Activated CD8-positive, alpha-beta memory T cell treated with anti-CD3 and anti-CD28 coated beads, Interleukin-2, amount 10 ng/mL, durations not matched to agents 7 days and 5 days (primary cell): ENCODE measurements at regions of chr1 and their contacts with region 1.

Region 1: GRCh38 chr1:110034451-110035235 is at the start of gene STRIP1:
- DNase-seq: peak; percentile 96
- ATAC-seq: peak; percentile 88
- H3K4me3 Mint-ChIP-seq: peak within 1 kb of the TSS; percentile 79
- H3K27ac Mint-ChIP-seq: peak within 1 kb of the TSS; percentile 95
- H3K4me1 Mint-ChIP-seq: peaks cover 54% of the 10 kb centered on the region
- H3K27me3 Mint-ChIP-seq: no peaks in the 10 kb centered on the region
- total RNA-seq, gene STRIP1: 40.4 to 40.8 TPM

Region 2: GRCh38 chr1:109838838-109839240 is 195.8 kb before region 1 on chr1:
- CTCF ChIA-PET with region 1: no interaction called
- DNase-seq: no peak
- ATAC-seq: no peak
- H3K4me3 Mint-ChIP-seq: no peak overlapping the region
- H3K27ac Mint-ChIP-seq: no peak overlapping the region
- H3K4me1 Mint-ChIP-seq: peaks cover 7% of the 10 kb centered on the region
- H3K27me3 Mint-ChIP-seq: peaks cover 2% of the 10 kb centered on the region

Region 3: GRCh38 chr1:110005971-110006370 is 28.7 kb before region 1 on chr1:
- CTCF ChIA-PET with region 1: interaction called, 17 read pairs
- DNase-seq: no peak
- ATAC-seq: no peak
- H3K4me3 Mint-ChIP-seq: no peak overlapping the region
- H3K27ac Mint-ChIP-seq: no peak overlapping the region
- H3K4me1 Mint-ChIP-seq: peaks cover 21% of the 10 kb centered on the region
- H3K27me3 Mint-ChIP-seq: no peaks in the 10 kb centered on the region

Region 4: DNA sequence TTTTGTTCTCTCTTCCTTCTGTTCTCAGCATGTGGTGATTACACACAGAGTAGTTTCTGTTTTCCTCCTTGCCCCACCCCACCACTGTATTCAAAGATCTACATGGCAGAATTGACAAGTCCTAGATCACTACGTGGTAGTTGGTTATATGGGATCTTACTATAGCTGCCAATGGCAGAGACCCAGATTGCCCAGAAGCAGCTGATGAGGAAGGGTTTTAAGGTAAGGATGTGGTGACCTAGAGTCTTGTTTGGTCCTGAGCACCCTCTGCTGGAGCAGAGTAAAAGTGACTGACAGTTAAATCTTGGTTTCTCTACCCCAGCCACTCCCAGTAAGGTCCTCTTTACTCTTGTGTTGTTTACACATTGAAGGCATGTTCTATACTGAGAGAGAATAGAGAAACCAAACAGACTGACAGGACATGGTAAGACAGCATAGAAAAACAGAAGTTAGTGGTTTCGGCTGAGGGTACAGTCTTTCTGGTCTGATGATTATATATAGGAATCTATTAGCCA is 23.1 kb before region 1 on chr1:
- CTCF ChIA-PET with region 1: interaction called, 30 read pairs
- DNase-seq: peak; percentile 62
- ATAC-seq: peak; percentile 97
- H3K4me3 Mint-ChIP-seq: no peak overlapping the region
- H3K27ac Mint-ChIP-seq: peak overlapping the region; percentile 65
- H3K4me1 Mint-ChIP-seq: peaks cover 4% of the 10 kb centered on the region
- H3K27me3 Mint-ChIP-seq: no peaks in the 10 kb centered on the region

Region 5: GRCh38 chr1:110019770-110020169 is 14.9 kb before region 1 on chr1:
- CTCF ChIA-PET with region 1: interaction called, 30 read pairs
- DNase-seq: no peak
- ATAC-seq: no peak
- H3K4me3 Mint-ChIP-seq: no peak overlapping the region
- H3K27ac Mint-ChIP-seq: no peak overlapping the region
- H3K4me1 Mint-ChIP-seq: no peaks in the 10 kb centered on the region
- H3K27me3 Mint-ChIP-seq: no peaks in the 10 kb centered on the region

Region 6: DNA sequence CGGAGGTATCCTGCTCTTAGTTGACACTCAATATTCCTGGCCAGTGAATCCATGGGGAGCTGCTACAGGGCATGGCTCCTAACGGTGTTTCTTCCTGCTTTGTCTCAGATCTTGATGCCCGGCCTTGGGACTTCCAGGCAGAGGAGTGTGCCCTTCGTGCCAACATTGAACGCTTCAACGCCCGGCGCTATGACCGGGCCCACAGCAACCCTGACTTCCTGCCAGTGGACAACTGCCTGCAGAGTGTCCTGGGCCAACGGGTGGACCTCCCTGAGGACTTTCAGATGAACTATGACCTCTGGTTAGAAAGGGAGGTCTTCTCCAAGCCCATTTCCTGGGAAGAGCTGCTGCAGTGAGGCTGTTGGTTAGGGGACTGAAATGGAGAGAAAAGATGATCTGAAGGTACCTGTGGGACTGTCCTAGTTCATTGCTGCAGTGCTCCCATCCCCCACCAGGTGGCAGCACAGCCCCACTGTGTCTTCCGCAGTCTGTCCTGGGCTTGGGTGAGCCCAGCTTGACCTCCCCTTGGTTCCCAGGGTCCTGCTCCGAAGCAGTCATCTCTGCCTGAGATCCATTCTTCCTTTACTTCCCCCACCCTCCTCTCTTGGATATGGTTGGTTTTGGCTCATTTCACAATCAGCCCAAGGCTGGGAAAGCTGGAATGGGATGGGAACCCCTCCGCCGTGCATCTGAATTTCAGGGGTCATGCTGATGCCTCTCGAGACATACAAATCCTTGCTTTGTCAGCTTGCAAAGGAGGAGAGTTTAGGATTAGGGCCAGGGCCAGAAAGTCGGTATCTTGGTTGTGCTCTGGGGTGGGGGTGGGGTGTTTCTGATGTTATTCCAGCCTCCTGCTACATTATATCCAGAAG is 19.1 kb after region 1 on chr1:
- CTCF ChIA-PET with region 1: interaction called, 23 read pairs
- DNase-seq: peak; percentile 74
- ATAC-seq: peak; percentile 81
- H3K4me3 Mint-ChIP-seq: no peak overlapping the region
- H3K27ac Mint-ChIP-seq: no peak overlapping the region
- H3K4me1 Mint-ChIP-seq: no peaks in the 10 kb centered on the region
- H3K27me3 Mint-ChIP-seq: no peaks in the 10 kb centered on the region

Region 7: DNA sequence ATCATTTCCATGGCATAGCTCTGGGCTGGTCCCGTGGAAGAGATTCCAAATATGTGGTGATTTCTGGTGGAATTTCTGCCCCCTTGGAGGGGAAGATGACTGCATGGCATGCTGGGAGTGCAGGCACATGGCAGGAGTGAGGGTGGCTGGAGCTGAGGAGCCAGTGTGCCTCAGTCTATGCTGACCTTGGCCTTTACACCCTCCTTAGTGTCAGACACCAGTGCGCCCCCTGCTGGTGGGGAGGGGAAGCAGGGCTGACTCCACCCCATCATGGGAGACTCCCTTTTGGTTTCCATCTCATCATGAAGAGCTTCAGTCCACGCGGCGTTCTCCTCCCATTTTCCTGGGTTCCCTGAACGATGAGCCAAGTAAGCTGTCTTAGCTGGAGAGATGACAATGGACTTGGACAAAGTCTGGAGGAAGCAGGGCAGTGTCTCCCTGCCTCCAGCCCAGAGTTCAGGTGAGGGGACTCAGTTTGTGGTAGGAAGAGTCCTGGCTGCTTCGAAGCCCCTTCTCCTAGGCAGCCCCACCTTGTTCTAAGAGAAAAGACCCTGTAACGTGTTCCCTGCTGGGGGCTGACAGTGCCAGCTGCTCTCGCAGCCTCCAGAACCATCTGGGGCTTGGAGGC is 25.5 kb after region 1 on chr1:
- CTCF ChIA-PET with region 1: interaction called, 23 read pairs
- DNase-seq: peak; percentile 81
- ATAC-seq: peak; percentile 85
- H3K4me3 Mint-ChIP-seq: no peak overlapping the region
- H3K27ac Mint-ChIP-seq: no peak overlapping the region
- H3K4me1 Mint-ChIP-seq: peaks cover 2% of the 10 kb centered on the region
- H3K27me3 Mint-ChIP-seq: no peaks in the 10 kb centered on the region

Region 8: DNA sequence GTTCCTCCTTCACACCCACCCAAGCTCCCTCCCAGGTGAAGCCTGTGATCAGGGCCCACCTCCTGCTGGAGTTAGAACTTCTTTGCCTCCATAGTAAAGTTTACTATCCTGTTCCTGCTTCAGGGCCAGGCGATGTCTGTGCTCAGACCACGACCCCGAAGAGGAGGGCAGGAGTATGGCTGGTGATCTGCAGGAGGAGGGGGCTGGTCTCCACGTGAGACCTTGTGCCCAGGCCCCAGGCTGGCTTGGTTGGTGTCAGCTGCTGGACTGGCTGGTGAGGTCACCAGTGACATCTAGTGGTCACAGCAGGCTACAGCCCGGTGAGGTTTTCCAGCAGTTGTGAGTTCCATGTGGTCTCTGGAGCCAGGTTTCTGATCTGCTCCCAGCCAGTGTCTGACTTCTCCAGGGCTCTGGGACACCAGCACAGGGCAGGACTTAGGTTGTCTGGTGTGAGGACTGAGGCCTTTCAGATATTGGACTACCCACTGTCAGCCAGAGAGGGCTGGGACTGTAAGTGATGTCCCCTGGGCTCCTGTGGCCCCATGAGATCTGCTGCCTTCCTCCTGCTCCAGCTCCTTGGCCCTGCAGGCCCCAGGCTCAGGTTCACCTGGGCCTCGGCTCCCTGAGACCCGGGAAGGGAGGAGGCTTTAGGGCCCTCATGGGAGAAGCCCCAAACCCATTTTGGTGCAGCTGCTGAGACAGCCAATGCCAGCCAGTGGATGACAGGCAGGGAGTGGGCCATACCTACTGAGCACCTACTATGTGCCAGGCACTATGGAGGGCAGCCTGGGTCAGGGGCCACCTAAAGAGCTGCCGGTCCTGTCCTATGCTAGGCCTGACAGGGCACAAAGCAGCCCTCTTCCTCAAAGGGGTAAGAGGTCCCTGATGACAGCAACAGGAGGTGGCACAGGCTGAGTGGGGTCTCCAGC is 71.6 kb after region 1 on chr1:
- CTCF ChIA-PET with region 1: interaction called, 19 read pairs
- DNase-seq: peak; percentile 74
- ATAC-seq: peak; percentile 84
- H3K4me3 Mint-ChIP-seq: no peak overlapping the region
- H3K27ac Mint-ChIP-seq: no peak overlapping the region
- H3K4me1 Mint-ChIP-seq: no peaks in the 10 kb centered on the region
- H3K27me3 Mint-ChIP-seq: peaks cover 23% of the 10 kb centered on the region

Region 9: GRCh38 chr1:110214516-110215379 is 180.1 kb after region 1 on chr1:
- CTCF ChIA-PET with region 1: no interaction called
- DNase-seq: no peak
- ATAC-seq: no peak
- H3K4me3 Mint-ChIP-seq: no peak overlapping the region
- H3K27ac Mint-ChIP-seq: no peak overlapping the region
- H3K4me1 Mint-ChIP-seq: peaks cover 40% of the 10 kb centered on the region
- H3K27me3 Mint-ChIP-seq: peaks cover 13% of the 10 kb centered on the region